HepG2 (cell line): ENCODE measurements at regions of chr3 and their contacts with region 1.

Region 1: GRCh38 chr3:111859974-111860859 is 1.2 kb downstream of the PHLDB2 start:
- DNase-seq: peak; percentile 71
- ATAC-seq: peak; percentile 80
- H3K4me3 ChIP-seq: peak overlapping the region; percentile 84 to 98 (median 88)
- H3K27ac ChIP-seq: peak overlapping the region; percentile 92
- H3K4me1 ChIP-seq: peaks cover 50% of the 10 kb centered on the region
- H3K27me3 ChIP-seq: no peaks in the 10 kb centered on the region; a peak in 1 of 5 replicates
- CTCF ChIP-seq: peak; percentile 41
- EP300 ChIP-seq: no peak
- POLR2A ChIP-seq: peak in 1 of 2 experiments; percentile 27; a peak in 2 of 4 replicates
- RAD21 ChIP-seq: peak; percentile 66

Region 2: GRCh38 chr3:111717601-111718000 is 142.6 kb before region 1 on chr3:
- CTCF ChIA-PET with region 1: interaction called, 12 read pairs
- POLR2A ChIA-PET with region 1: interaction called, 3 read pairs
- in situ Hi-C with region 1: loop called (anchors 5 kb)
- intact Hi-C with region 1: loop called (anchors 1 kb)
- DNase-seq: peak; percentile 78
- ATAC-seq: peak; percentile 96
- H3K4me3 ChIP-seq: no peak overlapping the region
- H3K27ac ChIP-seq: no peak overlapping the region
- H3K4me1 ChIP-seq: no peaks in the 10 kb centered on the region
- H3K27me3 ChIP-seq: no peaks in the 10 kb centered on the region
- CTCF ChIP-seq: peak; percentile 94
- EP300 ChIP-seq: no peak
- POLR2A ChIP-seq: no peak
- RAD21 ChIP-seq: peak; percentile 90

Region 3: DNA sequence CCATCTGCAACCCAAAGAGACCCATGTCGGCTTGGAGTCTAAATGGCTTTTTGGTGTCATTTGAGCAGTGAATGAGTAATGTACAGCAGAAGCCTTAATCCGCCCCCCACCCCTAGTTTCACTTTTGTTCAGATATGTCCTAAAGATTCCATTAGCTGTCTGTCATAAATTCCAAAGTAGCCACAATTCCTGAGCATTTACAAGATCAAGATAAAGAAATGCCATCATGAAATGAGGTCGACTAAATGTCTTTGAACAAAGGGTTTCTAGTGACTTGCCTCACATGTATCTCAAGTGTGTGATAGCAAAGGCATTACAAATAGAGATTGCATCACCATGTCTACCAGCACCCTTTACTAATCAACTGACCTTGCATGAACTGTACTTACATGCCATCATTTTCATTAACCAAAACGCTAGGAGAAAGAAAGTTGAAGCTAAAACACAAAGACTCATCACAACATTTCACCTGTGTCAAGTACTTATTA is 124.9 kb before region 1 on chr3:
- CTCF ChIA-PET with region 1: no interaction called
- POLR2A ChIA-PET with region 1: interaction called, 14 read pairs
- in situ Hi-C with region 1: no loop called
- intact Hi-C with region 1: loop called (anchors 5 kb)
- DNase-seq: peak; percentile 90
- ATAC-seq: no peak
- H3K4me3 ChIP-seq: peak overlapping the region in 2 of 3 experiments; percentile 38 to 79; a peak in 3 of 6 replicates
- H3K27ac ChIP-seq: peak overlapping the region; percentile 70
- H3K4me1 ChIP-seq: peaks cover 83% of the 10 kb centered on the region
- H3K27me3 ChIP-seq: no peaks in the 10 kb centered on the region
- CTCF ChIP-seq: no peak
- EP300 ChIP-seq: peak in 1 of 2 experiments; percentile 82; a peak in 2 of 4 replicates
- POLR2A ChIP-seq: 0 out of 4 replicates have a peak, but pooled peaks of 1 of the 2 experiments have one; percentile 26
- RAD21 ChIP-seq: no peak

Region 4: DNA sequence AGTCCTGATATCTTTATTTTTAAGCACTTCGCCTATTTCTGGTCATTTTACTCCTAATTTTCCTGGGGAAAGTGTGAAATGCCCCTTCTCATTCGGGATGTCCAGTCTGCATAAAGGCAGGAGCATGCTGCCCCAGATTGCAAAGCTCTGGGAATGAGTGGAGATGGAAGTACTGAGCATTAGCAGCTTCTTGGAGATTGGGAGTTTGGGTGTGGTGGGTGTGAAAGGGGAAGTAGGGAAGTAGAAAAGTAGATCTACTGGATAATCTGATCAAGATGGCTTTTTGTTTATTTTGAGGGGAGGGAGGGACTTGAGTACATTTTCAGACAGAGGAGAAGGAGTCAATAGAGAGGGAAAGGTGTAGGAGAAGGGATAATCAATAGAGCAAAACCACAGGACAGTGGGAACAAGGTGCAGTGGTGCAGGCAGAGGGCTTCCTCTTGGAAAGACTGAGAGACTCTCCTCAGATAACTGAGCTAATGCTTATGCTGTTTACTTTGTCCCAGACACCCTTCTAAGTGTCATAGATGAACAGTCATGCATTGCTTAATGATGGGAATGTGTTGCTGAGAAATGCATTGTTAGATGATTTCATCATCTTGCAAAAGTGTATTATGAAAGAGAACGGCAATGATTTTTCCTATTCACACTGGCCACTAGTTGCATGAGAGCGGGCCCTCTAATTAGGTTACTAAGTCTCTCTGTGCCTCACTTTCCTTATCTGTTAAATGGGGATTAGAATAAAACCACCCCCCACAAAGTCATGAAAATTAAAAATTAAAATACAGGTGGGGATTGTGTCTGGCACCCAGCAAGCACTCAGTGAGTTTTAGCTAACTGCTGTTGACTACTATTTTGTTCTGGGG is 44.4 kb after region 1 on chr3:
- CTCF ChIA-PET with region 1: no interaction called
- POLR2A ChIA-PET with region 1: no interaction called
- in situ Hi-C with region 1: no loop called
- intact Hi-C with region 1: loop called (anchors 5 kb)
- DNase-seq: peak; percentile 38
- ATAC-seq: peak; percentile 61
- H3K4me3 ChIP-seq: no peak overlapping the region
- H3K27ac ChIP-seq: no peak overlapping the region
- H3K4me1 ChIP-seq: peaks cover 23% of the 10 kb centered on the region
- H3K27me3 ChIP-seq: no peaks in the 10 kb centered on the region
- CTCF ChIP-seq: no peak
- EP300 ChIP-seq: no peak
- POLR2A ChIP-seq: no peak
- RAD21 ChIP-seq: no peak

Region 5: GRCh38 chr3:111947231-111947630 is 87.0 kb after region 1 on chr3:
- CTCF ChIA-PET with region 1: no interaction called
- POLR2A ChIA-PET with region 1: no interaction called
- in situ Hi-C with region 1: no loop called
- intact Hi-C with region 1: no loop called
- DNase-seq: no peak
- ATAC-seq: no peak
- H3K4me3 ChIP-seq: no peak overlapping the region
- H3K27ac ChIP-seq: no peak overlapping the region
- H3K4me1 ChIP-seq: no peaks in the 10 kb centered on the region
- H3K27me3 ChIP-seq: no peaks in the 10 kb centered on the region
- CTCF ChIP-seq: no peak
- EP300 ChIP-seq: no peak
- POLR2A ChIP-seq: no peak
- RAD21 ChIP-seq: no peak

Region 6: DNA sequence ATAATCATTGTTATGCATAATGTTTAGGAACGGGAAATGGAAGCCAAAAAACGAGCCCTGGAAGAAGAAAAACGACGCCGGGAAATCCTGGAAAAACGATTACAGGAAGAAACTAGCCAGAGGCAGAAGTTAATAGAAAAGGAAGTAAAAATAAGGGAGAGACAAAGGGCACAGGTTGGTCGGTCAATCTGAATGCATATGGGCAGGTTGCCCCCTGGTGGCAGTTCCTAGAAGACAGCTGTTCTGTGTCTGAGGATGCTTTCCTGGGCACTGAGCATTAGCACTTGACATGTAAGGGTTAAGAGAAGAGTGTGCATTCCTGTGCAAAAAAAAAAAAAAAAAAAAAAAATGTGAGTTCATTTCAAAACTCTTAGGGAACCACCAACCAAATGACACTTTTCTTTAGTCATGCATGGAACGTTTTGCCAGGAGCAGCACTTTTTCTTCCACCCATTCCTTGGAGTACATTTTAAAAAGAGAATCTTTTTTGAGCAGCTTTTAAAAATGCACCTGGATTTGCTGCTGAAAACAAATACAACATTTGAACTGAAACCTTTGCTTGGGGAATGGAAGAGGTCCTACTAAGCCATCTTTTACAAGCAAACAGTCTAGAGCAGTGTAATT is 107.5 kb after region 1 on chr3:
- CTCF ChIA-PET with region 1: no interaction called
- POLR2A ChIA-PET with region 1: no interaction called
- in situ Hi-C with region 1: no loop called
- intact Hi-C with region 1: loop called (anchors 1 kb)
- DNase-seq: peak; percentile 66
- ATAC-seq: peak; percentile 95
- H3K4me3 ChIP-seq: no peak overlapping the region
- H3K27ac ChIP-seq: no peak overlapping the region
- H3K4me1 ChIP-seq: peaks cover 10% of the 10 kb centered on the region
- H3K27me3 ChIP-seq: no peaks in the 10 kb centered on the region
- CTCF ChIP-seq: peak; percentile 86
- EP300 ChIP-seq: no peak
- POLR2A ChIP-seq: no peak
- RAD21 ChIP-seq: peak; percentile 72